ENCODE measurements at regions of chr14 and their contacts with region 1.

Region 1: GRCh38 chr14:101964297-101965144 is at the start of gene DYNC1H1:
- DNase-seq: peak; percentile 84
- H3K4me3 ChIP-seq: peak within 1 kb of the TSS; percentile 86 to 97 (median 97)
- H3K27ac ChIP-seq: peak within 1 kb of the TSS; percentile 80
- H3K4me1 ChIP-seq: peaks cover 32% of the 10 kb centered on the region
- H3K27me3 ChIP-seq: no peaks in the 10 kb centered on the region
- CTCF ChIP-seq: no peak
- total RNA-seq, gene DYNC1H1: 557 to 626 TPM

Region 2: GRCh38 chr14:101774006-101774795 is 190.3 kb before region 1 on chr14:
- CTCF ChIA-PET with region 1: no interaction called
- dilution Hi-C with region 1: no loop called
- in situ Hi-C with region 1: no loop called
- intact Hi-C with region 1: loop called (anchors 2 kb)
- DNase-seq: no peak
- H3K4me3 ChIP-seq: no peak overlapping the region
- H3K27ac ChIP-seq: no peak overlapping the region
- H3K4me1 ChIP-seq: no peaks in the 10 kb centered on the region
- H3K27me3 ChIP-seq: no peaks in the 10 kb centered on the region
- CTCF ChIP-seq: no peak

Region 3: DNA sequence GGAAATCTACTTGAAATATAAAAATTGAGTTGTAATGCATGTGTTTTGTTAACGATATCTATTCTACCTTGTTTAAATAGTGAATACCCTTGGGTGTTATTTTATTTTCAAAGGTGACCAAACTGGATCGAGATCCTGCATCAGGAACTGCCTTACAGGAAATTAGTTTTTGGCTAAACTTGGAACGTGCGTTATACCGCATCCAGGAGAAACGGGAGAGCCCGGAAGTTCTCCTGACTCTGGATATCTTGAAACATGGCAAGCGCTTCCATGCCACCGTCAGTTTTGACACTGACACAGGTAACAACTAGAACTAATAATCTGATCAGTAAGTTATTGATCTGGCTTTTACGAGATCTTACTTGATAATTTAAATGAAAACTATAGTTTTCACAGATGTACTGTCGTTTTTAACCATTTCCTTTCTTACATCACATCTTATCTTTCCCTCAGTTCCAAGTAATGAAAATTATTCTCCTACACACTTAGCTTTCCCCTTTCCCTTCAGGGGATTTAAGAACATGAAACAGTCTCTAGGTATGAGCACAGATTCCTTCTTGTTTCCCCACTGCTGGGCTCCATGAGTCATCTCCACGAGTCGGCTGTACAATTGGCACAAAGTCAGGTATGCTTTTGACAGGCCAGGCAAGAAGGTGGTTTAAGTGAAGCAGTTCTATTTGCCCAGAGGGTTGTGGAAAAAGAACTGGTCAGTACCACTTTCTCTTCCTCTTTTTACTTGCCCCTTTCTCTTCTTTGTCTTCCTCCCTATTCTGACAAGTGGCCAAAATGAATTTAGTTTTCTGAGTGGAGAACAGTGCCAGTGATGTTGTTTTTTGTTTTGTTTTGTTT is 16.0 kb after region 1 on chr14:
- CTCF ChIA-PET with region 1: no interaction called
- dilution Hi-C with region 1: no loop called
- in situ Hi-C with region 1: no loop called
- intact Hi-C with region 1: loop called (anchors 1 kb)
- DNase-seq: peak; percentile 98
- H3K4me3 ChIP-seq: no peak overlapping the region
- H3K27ac ChIP-seq: peak overlapping the region; percentile 74
- H3K4me1 ChIP-seq: peaks cover 32% of the 10 kb centered on the region
- H3K27me3 ChIP-seq: no peaks in the 10 kb centered on the region
- CTCF ChIP-seq: no peak

Region 4: DNA sequence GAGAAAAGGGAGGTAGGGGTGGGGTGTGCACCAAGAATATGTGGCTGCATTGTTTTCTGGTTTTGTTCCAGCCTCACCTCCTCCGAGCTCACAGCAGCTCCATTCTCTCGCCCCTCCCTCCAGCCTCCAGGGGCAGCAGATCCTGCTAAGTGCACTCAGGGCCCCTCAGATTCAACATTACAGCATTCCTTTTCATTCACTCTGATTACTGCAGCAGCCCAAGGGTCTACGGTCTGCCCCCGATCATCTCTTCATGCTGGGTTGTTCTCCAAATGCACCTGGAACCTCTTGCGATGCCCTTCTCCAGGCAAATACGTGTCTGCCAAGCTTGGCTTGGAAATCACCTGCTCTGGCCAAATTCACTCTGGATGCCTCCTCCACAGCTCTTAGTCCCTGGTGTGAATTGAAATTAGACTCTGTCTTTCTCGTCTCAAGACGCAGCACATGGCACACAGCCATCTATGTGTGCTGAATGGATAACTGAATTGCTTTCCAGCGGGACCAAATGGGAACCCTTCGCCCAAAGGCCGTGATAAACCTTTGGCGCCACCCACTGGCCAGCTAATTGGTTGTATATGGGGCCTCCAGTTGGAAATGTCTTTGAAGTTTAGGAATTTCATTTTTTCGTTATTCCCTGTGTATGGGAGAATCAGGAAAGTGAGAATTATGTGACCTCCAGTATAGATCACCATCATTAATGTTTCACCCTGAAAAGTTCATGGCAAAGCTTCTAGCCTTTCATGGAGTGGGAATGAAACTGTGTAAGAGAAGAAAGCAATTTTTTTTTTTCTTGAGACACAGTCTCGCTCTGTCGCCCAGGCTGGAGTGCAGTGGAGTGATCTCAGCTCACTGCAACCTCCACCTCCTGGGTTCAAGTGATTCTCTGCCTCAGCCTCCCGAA is 131.9 kb after region 1 on chr14:
- CTCF ChIA-PET with region 1: no interaction called
- dilution Hi-C with region 1: no loop called
- in situ Hi-C with region 1: no loop called
- intact Hi-C with region 1: loop called (anchors 1 kb)
- DNase-seq: peak; percentile 55
- H3K4me3 ChIP-seq: no peak overlapping the region
- H3K27ac ChIP-seq: no peak overlapping the region
- H3K4me1 ChIP-seq: peaks cover 19% of the 10 kb centered on the region
- H3K27me3 ChIP-seq: no peaks in the 10 kb centered on the region
- CTCF ChIP-seq: peak; percentile 77 to 85

Region 5: GRCh38 chr14:102220031-102220430 is 255.5 kb after region 1 on chr14:
- CTCF ChIA-PET with region 1: no interaction called
- dilution Hi-C with region 1: no loop called
- in situ Hi-C with region 1: no loop called
- intact Hi-C with region 1: loop called (anchors 2 kb)
- DNase-seq: no peak
- H3K4me3 ChIP-seq: no peak overlapping the region
- H3K27ac ChIP-seq: no peak overlapping the region
- H3K4me1 ChIP-seq: peaks cover 19% of the 10 kb centered on the region
- H3K27me3 ChIP-seq: no peaks in the 10 kb centered on the region
- CTCF ChIP-seq: no peak